B cell (primary cell): ENCODE measurements at regions of chr12 and their contacts with region 1.

Region 1: DNA sequence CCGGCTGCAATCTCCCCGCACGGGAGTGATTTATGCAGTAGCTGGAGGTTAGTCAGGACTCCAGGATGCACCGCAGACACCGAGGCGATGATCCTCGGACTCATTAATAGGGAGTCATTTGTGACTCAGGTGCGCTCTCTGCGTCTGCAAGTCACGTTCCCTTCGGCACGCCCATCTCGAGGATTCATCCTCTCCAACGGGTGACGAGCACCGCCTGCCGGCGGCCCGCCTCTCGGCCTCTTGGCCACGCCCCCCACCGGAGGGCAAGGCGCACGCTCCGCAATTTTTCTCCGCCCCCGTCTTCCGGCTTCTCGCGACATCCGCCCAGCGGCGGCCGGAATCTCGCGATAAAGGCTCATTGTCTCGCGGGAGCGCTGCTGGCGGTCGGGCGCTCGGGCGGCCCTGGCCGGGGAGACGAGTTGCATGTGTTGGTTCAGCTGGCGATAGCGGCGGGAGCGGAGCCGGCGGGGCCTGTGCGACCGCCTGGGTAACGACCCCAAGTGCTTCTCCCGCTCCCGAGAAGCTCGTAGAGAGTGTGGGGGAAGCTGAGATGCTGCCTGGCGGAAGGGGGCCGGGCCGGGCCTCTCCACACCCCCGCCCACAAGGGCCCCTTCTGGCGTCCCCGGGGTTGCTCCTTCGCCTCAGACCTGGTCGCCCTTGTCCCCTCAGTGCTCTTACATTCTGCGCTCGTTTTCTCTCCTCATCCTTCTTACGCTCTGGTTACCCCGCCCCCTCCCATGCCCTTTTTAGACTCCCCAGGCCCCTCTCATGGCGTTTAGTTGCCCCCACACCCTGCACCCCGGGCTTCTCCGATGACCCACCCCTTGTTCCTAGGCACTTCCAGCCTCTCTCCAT is at the start of gene DENR:
- DNase-seq: peak; percentile 99
- ATAC-seq: peak; percentile 94
- H3K4me3 ChIP-seq: peak within 1 kb of the TSS; percentile 60 to 83 (median 78)
- H3K4me3 Mint-ChIP-seq: peak within 1 kb of the TSS; percentile 96
- H3K27ac ChIP-seq: peak within 1 kb of the TSS; percentile 75 to 90
- H3K27ac Mint-ChIP-seq: peak within 1 kb of the TSS; percentile 94
- H3K4me1 ChIP-seq: peaks cover 13 to 23% of the 10 kb centered on the region in 2 donors
- H3K4me1 Mint-ChIP-seq: peaks cover 48% of the 10 kb centered on the region
- H3K27me3 ChIP-seq: no peaks in the 10 kb centered on the region
- H3K27me3 Mint-ChIP-seq: no peaks in the 10 kb centered on the region
- CTCF ChIP-seq: peak; percentile 80
- total RNA-seq, gene DENR: 54.5 and 59.0 TPM in 2 replicates

Region 2: GRCh38 chr12:122265931-122266771 is 486.5 kb before region 1 on chr12 and contains the start of gene VPS33A:
- CTCF ChIA-PET with region 1: no interaction called
- POLR2A ChIA-PET with region 1: no interaction called
- intact Hi-C with region 1: loop called (anchors 1 kb)
- DNase-seq: peak; percentile 96
- ATAC-seq: peak; percentile 82
- H3K4me3 ChIP-seq: peak within 1 kb of the TSS; percentile 70 to 96 (median 91)
- H3K4me3 Mint-ChIP-seq: peak within 1 kb of the TSS; percentile 99
- H3K27ac ChIP-seq: peak within 1 kb of the TSS; percentile 89 to 97
- H3K27ac Mint-ChIP-seq: peak within 1 kb of the TSS; percentile 100
- H3K4me1 ChIP-seq: peaks cover 9 to 14% of the 10 kb centered on the region in 2 donors
- H3K4me1 Mint-ChIP-seq: peaks cover 23% of the 10 kb centered on the region
- H3K27me3 ChIP-seq: no peaks in the 10 kb centered on the region
- H3K27me3 Mint-ChIP-seq: no peaks in the 10 kb centered on the region
- CTCF ChIP-seq: no peak
- total RNA-seq, gene VPS33A: 34.6 and 34.9 TPM in 2 replicates

Region 3: GRCh38 chr12:122374707-122375106 is 378.0 kb before region 1 on chr12:
- CTCF ChIA-PET with region 1: no interaction called
- POLR2A ChIA-PET with region 1: interaction called, 10 read pairs
- intact Hi-C with region 1: no loop called
- DNase-seq: no peak
- ATAC-seq: no peak
- H3K4me3 ChIP-seq: no peak overlapping the region
- H3K4me3 Mint-ChIP-seq: no peak overlapping the region
- H3K27ac ChIP-seq: no peak overlapping the region
- H3K27ac Mint-ChIP-seq: no peak overlapping the region
- H3K4me1 ChIP-seq: no peaks in the 10 kb centered on the region
- H3K4me1 Mint-ChIP-seq: peaks cover 9% of the 10 kb centered on the region
- H3K27me3 ChIP-seq: no peaks in the 10 kb centered on the region
- H3K27me3 Mint-ChIP-seq: no peaks in the 10 kb centered on the region
- CTCF ChIP-seq: no peak

Region 4: GRCh38 chr12:122500685-122501488 is 251.8 kb before region 1 on chr12 and contains the start of gene ZCCHC8:
- CTCF ChIA-PET with region 1: no interaction called
- POLR2A ChIA-PET with region 1: no interaction called
- intact Hi-C with region 1: loop called (anchors 1 kb)
- DNase-seq: peak; percentile 97
- ATAC-seq: peak; percentile 91
- H3K4me3 ChIP-seq: peak within 1 kb of the TSS; percentile 71 to 93 (median 84)
- H3K4me3 Mint-ChIP-seq: peak within 1 kb of the TSS; percentile 83
- H3K27ac ChIP-seq: peak within 1 kb of the TSS; percentile 79 to 93
- H3K27ac Mint-ChIP-seq: peak within 1 kb of the TSS; percentile 87
- H3K4me1 ChIP-seq: peaks cover 15 to 30% of the 10 kb centered on the region in 2 donors
- H3K4me1 Mint-ChIP-seq: peaks cover 36% of the 10 kb centered on the region
- H3K27me3 ChIP-seq: no peaks in the 10 kb centered on the region
- H3K27me3 Mint-ChIP-seq: no peaks in the 10 kb centered on the region
- CTCF ChIP-seq: no peak
- total RNA-seq, gene ZCCHC8: 56.2 and 57.0 TPM in 2 replicates

Region 5: GRCh38 chr12:122635471-122635870 is 117.2 kb before region 1 on chr12:
- CTCF ChIA-PET with region 1: interaction called, 48 read pairs
- POLR2A ChIA-PET with region 1: no interaction called
- intact Hi-C with region 1: loop called (anchors 1 kb)
- DNase-seq: no peak
- ATAC-seq: no peak
- H3K4me3 ChIP-seq: no peak overlapping the region
- H3K4me3 Mint-ChIP-seq: no peak overlapping the region
- H3K27ac ChIP-seq: no peak overlapping the region
- H3K27ac Mint-ChIP-seq: no peak overlapping the region
- H3K4me1 ChIP-seq: peaks cover 0 to 7% of the 10 kb centered on the region in 2 donors
- H3K4me1 Mint-ChIP-seq: peaks cover 2% of the 10 kb centered on the region
- H3K27me3 ChIP-seq: no peaks in the 10 kb centered on the region
- H3K27me3 Mint-ChIP-seq: no peaks in the 10 kb centered on the region
- CTCF ChIP-seq: no peak

Region 6: GRCh38 chr12:122740351-122740750 is 12.3 kb before region 1 on chr12:
- CTCF ChIA-PET with region 1: no interaction called
- POLR2A ChIA-PET with region 1: no interaction called
- intact Hi-C with region 1: no loop called
- DNase-seq: no peak
- ATAC-seq: no peak
- H3K4me3 ChIP-seq: no peak overlapping the region
- H3K4me3 Mint-ChIP-seq: no peak overlapping the region
- H3K27ac ChIP-seq: no peak overlapping the region
- H3K27ac Mint-ChIP-seq: no peak overlapping the region
- H3K4me1 ChIP-seq: no peaks in the 10 kb centered on the region
- H3K4me1 Mint-ChIP-seq: peaks cover 1% of the 10 kb centered on the region
- H3K27me3 ChIP-seq: no peaks in the 10 kb centered on the region
- H3K27me3 Mint-ChIP-seq: no peaks in the 10 kb centered on the region
- CTCF ChIP-seq: no peak

Region 7: DNA sequence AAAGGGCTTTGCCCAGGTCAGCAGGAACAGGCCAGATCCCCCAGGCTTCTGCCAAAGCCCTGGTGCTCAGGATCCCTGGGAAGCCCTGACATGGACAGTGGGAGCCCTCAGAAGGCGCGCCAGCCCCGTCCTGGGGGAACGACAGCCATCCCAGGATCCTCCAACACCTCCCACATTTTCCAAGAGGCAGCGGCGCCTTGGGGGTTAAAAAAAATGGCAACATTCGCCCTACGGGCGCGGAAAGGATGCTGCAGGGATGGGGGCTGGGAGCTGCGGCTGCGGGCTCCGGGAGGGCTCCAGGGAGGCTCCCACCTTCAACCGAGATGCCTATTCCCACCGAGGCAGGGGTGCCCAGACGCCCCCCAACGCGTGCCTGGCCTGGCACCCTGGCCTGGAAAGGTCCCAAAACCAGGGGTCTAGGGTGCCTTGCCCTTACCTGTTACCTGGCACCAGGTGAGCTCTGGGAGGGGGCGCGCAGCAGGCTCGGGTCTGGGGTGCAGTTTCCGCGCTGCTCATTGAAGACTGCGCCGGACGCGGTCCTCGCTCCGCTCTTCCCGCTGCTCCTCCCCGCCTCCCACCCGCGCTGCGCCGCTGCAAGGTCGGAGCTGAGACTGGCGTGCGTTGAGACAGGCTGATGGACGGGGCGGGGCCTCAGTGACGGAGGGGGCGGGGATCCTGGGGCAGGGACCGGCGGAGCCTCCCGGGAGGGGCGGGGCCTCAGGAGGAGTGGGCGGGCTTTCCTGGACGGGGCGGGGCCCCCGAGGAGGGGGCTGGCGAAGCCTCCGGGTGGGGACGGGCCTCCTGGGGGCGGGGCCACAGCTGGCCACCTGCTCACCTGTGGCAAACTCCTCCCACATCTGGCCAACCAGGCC is 213.4 kb after region 1 on chr12 and contains the start of gene ABCB9:
- CTCF ChIA-PET with region 1: no interaction called
- POLR2A ChIA-PET with region 1: no interaction called
- intact Hi-C with region 1: loop called (anchors 2 kb)
- DNase-seq: peak; percentile 92
- ATAC-seq: peak; percentile 98
- H3K4me3 ChIP-seq: peak within 1 kb of the TSS in 4 of 5 experiments; percentile 40 to 68 (median 58)
- H3K4me3 Mint-ChIP-seq: peak within 1 kb of the TSS; percentile 83
- H3K27ac ChIP-seq: no peak within 1 kb of the TSS
- H3K27ac Mint-ChIP-seq: peak within 1 kb of the TSS; percentile 46
- H3K4me1 ChIP-seq: peaks cover 8 to 14% of the 10 kb centered on the region in 2 donors
- H3K4me1 Mint-ChIP-seq: peaks cover 6% of the 10 kb centered on the region
- H3K27me3 ChIP-seq: no peaks in the 10 kb centered on the region
- H3K27me3 Mint-ChIP-seq: no peaks in the 10 kb centered on the region
- CTCF ChIP-seq: no peak
- total RNA-seq, gene ABCB9: 2.5 and 3.7 TPM in 2 replicates